IMR-90 (cell line): ENCODE measurements at regions of chr7 and their contacts with region 1.

Region 1: DNA sequence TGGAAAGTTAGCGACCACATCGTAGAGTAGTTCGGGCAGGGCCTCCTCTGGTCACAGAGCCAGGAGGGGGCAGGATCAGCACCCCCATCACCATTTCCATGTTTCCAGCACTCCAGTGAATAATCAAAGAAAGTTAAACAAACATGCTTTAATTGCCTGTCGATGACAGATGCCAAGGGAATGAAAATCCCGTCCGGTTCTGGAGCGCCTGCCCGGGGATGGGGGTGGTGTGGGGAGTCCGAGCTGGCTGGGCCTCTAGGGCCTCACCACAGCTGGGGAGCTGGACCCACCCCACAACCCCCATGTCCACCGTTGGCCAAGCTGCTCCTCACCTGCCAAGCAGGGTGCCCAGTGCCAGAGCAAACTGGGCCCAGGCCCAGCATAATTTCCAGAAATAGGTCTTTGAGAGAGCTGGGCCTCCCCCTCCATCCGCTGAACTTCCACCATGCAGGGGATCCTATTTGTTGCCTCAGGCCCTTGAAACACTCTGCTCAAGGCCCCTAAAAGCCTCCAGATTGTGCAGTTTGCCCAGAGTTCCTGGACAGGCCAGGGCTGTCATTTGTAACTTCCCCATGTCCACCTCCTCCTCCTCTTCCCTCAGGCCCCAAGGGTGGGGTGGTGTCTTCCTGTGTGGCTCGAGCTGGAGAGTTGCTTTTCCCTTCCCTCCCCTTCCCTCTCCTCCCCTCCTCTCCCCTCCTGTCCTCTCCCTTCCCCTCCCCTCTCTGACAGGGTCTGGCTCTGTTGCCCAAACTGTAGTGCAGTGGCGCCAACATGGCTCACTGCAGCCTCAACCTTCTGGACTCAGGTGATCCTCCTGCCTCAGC is 101.0 kb downstream of the MYL10 start:
- DNase-seq: peak; percentile 69
- ATAC-seq: peak; percentile 93
- H3K4me3 ChIP-seq: no peak overlapping the region
- H3K27ac ChIP-seq: peak overlapping the region; percentile 79
- H3K4me1 ChIP-seq: peaks cover 10% of the 10 kb centered on the region
- H3K27me3 ChIP-seq: no peaks in the 10 kb centered on the region; the same call in 1 of the 2 replicates
- CTCF ChIP-seq: no peak
- POLR2A ChIP-seq: no peak
- RAD21 ChIP-seq: no peak

Region 2: GRCh38 chr7:100418930-100419659 is 1109.0 kb before region 1 on chr7:
- CTCF ChIA-PET with region 1: no interaction called
- POLR2A ChIA-PET with region 1: no interaction called
- dilution Hi-C with region 1: no loop called
- in situ Hi-C with region 1: no loop called
- intact Hi-C with region 1: no loop called
- DNase-seq: no peak
- ATAC-seq: peak; percentile 66
- H3K4me3 ChIP-seq: no peak overlapping the region
- H3K27ac ChIP-seq: no peak overlapping the region
- H3K4me1 ChIP-seq: no peaks in the 10 kb centered on the region; the same call in 1 of the 2 replicates
- H3K27me3 ChIP-seq: no peaks in the 10 kb centered on the region
- CTCF ChIP-seq: no peak
- POLR2A ChIP-seq: no peak
- RAD21 ChIP-seq: no peak

Region 3: DNA sequence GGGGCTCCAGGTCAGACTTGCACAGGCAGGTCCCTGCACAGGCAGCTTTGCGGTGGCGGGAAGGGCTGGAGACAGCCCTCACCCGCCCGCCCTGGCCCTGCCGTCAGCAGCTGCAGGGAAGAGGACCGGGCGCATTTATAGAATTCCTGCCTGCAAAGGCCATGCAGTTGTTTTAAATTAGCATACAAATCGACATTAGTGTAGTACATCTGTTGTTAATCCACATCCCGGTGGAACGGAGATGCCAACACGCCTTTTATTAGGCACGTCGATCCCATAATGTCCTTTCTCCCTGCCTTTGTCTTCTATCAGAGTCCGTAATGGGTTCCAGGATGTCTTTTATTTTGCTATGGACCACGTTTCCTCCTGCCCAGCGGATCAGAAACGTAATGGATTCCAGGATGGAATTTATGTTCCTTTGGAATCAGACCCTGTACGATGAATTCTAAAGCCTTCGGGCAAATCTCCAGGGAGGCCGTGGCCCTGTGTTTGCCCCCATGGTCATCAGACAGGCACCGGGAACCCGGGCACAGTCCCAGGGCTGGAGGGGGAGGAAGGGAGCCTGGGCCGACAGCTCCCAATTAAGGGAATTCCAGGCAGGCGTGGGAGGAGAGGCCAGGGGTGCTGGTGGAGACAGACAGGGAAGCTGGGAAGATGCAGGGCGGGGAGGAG is 41.5 kb before region 1 on chr7:
- CTCF ChIA-PET with region 1: no interaction called
- POLR2A ChIA-PET with region 1: no interaction called
- dilution Hi-C with region 1: no loop called
- in situ Hi-C with region 1: no loop called
- intact Hi-C with region 1: no loop called
- DNase-seq: no peak
- ATAC-seq: peak; percentile 37; the same call in 1 of the 2 replicates
- H3K4me3 ChIP-seq: no peak overlapping the region
- H3K27ac ChIP-seq: no peak overlapping the region
- H3K4me1 ChIP-seq: no peaks in the 10 kb centered on the region
- H3K27me3 ChIP-seq: peaks cover 29% of the 10 kb centered on the region
- CTCF ChIP-seq: no peak
- POLR2A ChIP-seq: no peak
- RAD21 ChIP-seq: no peak

Region 4: DNA sequence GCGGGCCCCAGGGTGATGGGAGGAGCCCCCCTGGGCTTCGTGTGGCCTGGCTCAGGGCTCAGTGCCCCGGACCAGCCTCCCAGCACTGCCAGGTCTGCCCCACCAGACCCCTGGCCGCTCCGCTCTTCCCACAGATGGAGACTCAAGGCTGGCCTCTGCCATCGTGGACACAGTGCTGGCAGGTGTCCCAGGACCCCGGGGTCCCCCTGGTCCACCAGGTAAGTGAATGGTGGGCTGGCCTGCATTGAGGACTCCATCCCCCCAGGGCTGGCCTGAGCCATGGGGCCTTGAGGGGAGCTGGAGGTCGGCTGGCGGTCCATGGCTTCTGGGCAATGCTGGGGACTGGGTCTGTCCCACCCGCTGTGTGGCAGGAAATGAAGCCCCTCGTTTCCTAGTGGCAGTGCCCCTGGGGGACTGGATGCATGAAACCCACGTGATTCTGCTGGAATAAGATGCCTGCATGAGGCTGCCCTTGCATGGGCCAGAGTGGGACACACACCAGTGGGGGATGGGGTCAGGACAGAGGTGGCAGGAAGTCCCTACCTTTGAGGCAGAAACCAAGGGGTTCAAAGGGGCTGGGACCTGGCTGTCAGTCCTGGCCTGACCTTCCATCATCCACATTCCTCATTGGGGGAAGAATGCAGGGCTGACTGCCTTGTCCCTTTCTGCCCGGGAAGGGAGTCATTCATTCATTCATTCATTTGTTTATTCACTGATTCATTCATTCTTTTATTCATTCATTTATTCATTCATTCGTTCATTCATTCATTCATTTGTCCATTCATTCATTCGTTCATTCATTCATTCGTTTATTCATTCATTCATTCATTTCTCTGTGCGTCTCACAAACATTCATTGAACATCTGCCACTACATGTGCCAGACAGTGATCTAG is 19.2 kb after region 1 on chr7:
- CTCF ChIA-PET with region 1: no interaction called
- POLR2A ChIA-PET with region 1: no interaction called
- dilution Hi-C with region 1: no loop called
- in situ Hi-C with region 1: no loop called
- intact Hi-C with region 1: no loop called
- DNase-seq: no peak
- ATAC-seq: no peak
- H3K4me3 ChIP-seq: no peak overlapping the region
- H3K27ac ChIP-seq: no peak overlapping the region
- H3K4me1 ChIP-seq: no peaks in the 10 kb centered on the region
- H3K27me3 ChIP-seq: peaks cover 2% of the 10 kb centered on the region; the same call in 1 of the 2 replicates
- CTCF ChIP-seq: no peak
- POLR2A ChIP-seq: no peak
- RAD21 ChIP-seq: no peak

Region 5: GRCh38 chr7:102266541-102266940 is 738.5 kb after region 1 on chr7:
- CTCF ChIA-PET with region 1: no interaction called
- POLR2A ChIA-PET with region 1: interaction called, 15 read pairs
- dilution Hi-C with region 1: no loop called
- in situ Hi-C with region 1: no loop called
- intact Hi-C with region 1: no loop called
- DNase-seq: no peak
- ATAC-seq: no peak
- H3K4me3 ChIP-seq: no peak overlapping the region
- H3K27ac ChIP-seq: no peak overlapping the region
- H3K4me1 ChIP-seq: peaks cover 4% of the 10 kb centered on the region; the same call in 1 of the 2 replicates
- H3K27me3 ChIP-seq: no peaks in the 10 kb centered on the region
- CTCF ChIP-seq: no peak
- POLR2A ChIP-seq: no peak
- RAD21 ChIP-seq: no peak